ENCODE measurements at regions of chr3 and their contacts with region 1.

Region 1: DNA sequence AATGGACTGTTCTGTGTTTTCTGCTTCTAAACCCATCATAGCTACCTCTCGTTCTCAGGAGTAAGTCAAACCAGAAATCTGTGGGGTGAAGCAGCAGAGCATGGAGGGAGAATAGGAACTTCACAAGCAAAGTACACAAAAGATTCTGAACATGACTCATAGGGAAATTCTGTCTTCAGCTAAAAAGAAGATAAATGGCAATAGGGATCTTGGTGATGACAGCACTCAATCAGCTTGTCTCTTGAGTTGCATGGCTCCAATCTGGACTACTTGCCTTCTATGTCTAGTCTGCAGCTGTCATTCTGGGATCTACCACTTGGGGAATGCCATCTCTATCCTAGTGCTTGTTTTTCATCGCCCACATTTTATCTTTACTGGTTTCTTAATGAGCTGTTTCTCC is 13.5 kb upstream of the GRAMD1C start:
- DNase-seq: no peak
- H3K4me3 ChIP-seq: no peak overlapping the region
- H3K27ac ChIP-seq: no peak overlapping the region
- H3K4me1 ChIP-seq: no peaks in the 10 kb centered on the region
- H3K27me3 ChIP-seq: no peaks in the 10 kb centered on the region
- CTCF ChIP-seq: no peak
- EP300 ChIP-seq: no peak
- POLR2A ChIP-seq: no peak

Region 2: DNA sequence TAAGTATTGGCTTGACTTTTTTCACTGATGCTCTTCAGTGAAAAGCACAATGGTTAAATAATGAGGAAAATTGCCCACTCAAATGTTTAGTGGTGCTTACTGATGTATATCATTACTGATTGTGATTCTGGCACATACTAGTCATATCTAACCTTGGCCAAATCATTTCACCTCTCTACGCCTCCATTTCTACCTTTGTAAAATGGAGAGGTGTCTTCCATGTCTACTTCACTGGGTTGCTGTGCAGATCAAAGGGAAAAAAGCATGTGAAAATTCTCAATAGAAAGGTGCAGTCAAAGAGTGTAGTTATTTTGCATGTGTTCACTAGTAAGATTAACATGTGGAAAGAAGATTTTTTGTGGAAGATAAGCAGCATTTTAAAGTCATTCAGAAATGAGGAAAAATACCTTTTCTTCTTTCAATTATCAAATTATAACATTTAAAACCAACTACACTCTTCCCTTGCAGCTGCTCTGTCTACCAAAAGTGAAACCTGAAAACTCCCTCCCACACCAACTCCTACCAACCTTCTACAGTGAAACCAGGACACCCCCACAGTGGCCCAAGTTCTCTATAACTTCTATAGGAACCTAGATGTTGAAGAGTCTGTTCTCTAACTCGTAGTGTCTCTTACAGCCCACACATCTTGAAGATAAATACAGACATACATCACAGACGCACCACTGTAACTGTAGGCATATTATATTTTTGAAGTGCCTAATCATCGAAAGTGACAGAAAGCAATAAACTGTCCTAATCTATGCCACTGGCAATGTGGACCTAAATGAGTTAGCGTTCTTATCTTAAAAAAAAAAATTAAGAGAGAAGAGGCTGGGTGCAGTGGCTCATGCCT is 851.5 kb before region 1 on chr3:
- intact Hi-C with region 1: loop called in 1 of 4 experiments (anchors 5 kb)
- DNase-seq: no peak
- H3K4me3 ChIP-seq: no peak overlapping the region
- H3K27ac ChIP-seq: no peak overlapping the region
- H3K4me1 ChIP-seq: no peaks in the 10 kb centered on the region
- H3K27me3 ChIP-seq: no peaks in the 10 kb centered on the region
- CTCF ChIP-seq: no peak
- EP300 ChIP-seq: no peak
- POLR2A ChIP-seq: no peak

Region 3: GRCh38 chr3:113698956-113699355 is 126.1 kb before region 1 on chr3:
- intact Hi-C with region 1: no loop called
- DNase-seq: peak; percentile 14 to 39 (median 32)
- H3K4me3 ChIP-seq: peak overlapping the region; percentile 13
- H3K27ac ChIP-seq: peak overlapping the region in 1 of 2 donors; percentile 52
- H3K4me1 ChIP-seq: peaks cover 2% of the 10 kb centered on the region
- H3K27me3 ChIP-seq: no peaks in the 10 kb centered on the region
- CTCF ChIP-seq: no peak
- EP300 ChIP-seq: no peak
- POLR2A ChIP-seq: no peak